Mammary epithelial cell (primary cell): ENCODE measurements at regions of chr17 and their contacts with region 1.

Region 1: GRCh38 chr17:40559954-40560591 is 5.2 kb downstream of the CCR7 start:
- DNase-seq: peak; percentile 90
- H3K4me3 ChIP-seq: no peak overlapping the region
- H3K27ac ChIP-seq: peak overlapping the region; percentile 30
- H3K4me1 ChIP-seq: peaks cover 15% of the 10 kb centered on the region
- H3K27me3 ChIP-seq: no peaks in the 10 kb centered on the region
- CTCF ChIP-seq: peak; percentile 99

Region 2: DNA sequence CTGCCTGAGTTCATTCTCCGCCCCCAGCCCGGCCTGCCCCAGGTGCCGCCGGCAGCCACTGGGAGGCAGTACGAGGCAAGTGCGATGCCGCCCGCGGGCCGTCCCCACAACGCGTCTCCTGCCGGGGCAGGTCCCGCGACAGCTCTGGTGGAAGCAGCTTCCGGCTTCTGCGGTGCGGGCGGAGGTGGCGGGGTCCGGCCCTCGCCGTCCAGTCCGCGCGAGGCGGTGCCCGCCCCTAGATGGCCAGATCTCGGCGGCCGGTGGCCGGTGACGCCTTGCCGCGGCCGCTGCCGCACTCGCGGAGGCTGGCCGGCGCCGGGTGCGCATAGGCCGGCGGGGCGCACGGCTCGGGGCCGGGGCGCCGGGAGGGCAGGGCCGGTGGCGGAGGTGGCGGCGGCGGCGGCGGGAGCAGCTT is 197.4 kb before region 1 on chr17:
- CTCF ChIA-PET with region 1: no interaction called
- dilution Hi-C with region 1: no loop called
- in situ Hi-C with region 1: no loop called
- intact Hi-C with region 1: loop called (anchors 1 kb)
- DNase-seq: peak; percentile 68
- H3K4me3 ChIP-seq: peak overlapping the region in 2 of 3 experiments; percentile 53 to 55
- H3K27ac ChIP-seq: no peak overlapping the region
- H3K4me1 ChIP-seq: peaks cover 8% of the 10 kb centered on the region
- H3K27me3 ChIP-seq: no peaks in the 10 kb centered on the region
- CTCF ChIP-seq: peak; percentile 63 to 84

Region 3: DNA sequence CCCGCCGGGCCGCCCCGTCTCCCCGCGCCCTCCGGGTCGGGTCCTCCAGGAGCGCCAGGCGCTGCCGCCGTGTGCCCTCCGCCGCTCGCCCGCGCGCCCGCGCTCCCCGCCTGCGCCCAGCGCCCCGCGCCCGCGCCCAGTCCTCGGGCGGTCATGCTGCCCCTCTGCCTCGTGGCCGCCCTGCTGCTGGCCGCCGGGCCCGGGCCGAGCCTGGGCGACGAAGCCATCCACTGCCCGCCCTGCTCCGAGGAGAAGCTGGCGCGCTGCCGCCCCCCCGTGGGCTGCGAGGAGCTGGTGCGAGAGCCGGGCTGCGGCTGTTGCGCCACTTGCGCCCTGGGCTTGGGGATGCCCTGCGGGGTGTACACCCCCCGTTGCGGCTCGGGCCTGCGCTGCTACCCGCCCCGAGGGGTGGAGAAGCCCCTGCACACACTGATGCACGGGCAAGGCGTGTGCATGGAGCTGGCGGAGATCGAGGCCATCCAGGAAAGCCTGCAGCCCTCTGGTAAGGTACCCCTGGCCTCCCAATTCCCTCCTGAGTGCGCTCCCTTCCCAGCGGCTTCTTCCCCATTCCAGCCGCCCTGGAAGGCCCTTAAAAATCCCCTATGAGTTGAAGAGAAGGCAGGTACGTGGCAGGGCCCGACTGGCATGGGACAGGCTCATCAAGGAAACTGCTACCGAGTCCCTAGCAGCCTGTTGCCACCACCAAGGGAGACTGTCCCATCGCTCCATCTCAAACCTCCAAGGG is 116.3 kb before region 1 on chr17:
- CTCF ChIA-PET with region 1: interaction called, 11 read pairs
- dilution Hi-C with region 1: loop called (anchors 5 kb)
- in situ Hi-C with region 1: no loop called
- intact Hi-C with region 1: loop called (anchors 1 kb)
- DNase-seq: peak; percentile 55
- H3K4me3 ChIP-seq: peak overlapping the region; percentile 25 to 60 (median 45)
- H3K27ac ChIP-seq: peak overlapping the region; percentile 0
- H3K4me1 ChIP-seq: peaks cover 34% of the 10 kb centered on the region
- H3K27me3 ChIP-seq: no peaks in the 10 kb centered on the region
- CTCF ChIP-seq: peak; percentile 41 to 68

Region 4: GRCh38 chr17:40490289-40490853 is 69.7 kb before region 1 on chr17:
- CTCF ChIA-PET with region 1: no interaction called
- dilution Hi-C with region 1: no loop called
- in situ Hi-C with region 1: no loop called
- intact Hi-C with region 1: loop called (anchors 1 kb)
- DNase-seq: peak; percentile 85
- H3K4me3 ChIP-seq: no peak overlapping the region
- H3K27ac ChIP-seq: peak overlapping the region; percentile 96
- H3K4me1 ChIP-seq: peaks cover 97% of the 10 kb centered on the region
- H3K27me3 ChIP-seq: no peaks in the 10 kb centered on the region
- CTCF ChIP-seq: peak in 1 of 2 donors; percentile 1

Region 5: DNA sequence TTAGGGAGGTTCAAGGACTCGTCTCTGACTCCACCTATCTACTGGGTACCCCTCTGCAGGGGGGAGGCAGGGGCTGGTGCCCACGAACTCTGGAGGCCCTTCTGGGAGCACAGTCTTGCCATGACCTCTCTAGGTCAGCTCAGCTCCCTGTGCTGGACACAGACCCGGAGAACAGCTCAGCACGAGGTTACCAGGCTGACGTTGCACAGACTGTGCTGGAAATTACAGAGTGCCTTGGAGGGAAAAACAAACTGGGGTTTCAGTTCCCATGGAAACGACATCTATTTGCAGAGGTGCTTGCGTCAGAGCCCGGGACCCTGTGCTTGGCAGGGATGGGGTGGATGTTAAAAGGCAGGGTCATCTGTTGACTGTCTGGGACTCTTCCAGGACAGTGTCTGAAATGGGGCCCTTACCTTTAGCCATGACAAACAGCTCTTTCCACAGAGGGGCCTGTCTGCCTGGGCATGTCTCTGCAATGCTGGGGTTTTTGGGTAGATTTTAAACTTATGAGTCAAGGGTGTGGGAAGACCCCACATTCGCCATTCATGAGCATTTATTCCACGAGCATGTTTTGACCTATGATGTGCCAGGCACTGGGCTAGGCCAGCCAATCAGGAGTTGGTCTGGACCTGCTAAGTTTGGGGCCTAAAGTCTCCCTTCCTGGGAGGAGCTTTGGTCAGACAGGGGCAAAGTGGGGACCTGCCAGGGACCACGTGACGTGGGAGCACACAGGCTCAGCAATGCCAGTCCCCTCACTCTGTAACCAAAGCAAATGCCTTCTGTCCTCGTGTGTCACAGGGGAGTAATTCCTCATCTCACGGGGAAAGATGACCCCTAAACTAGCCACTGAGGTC is 17.3 kb before region 1 on chr17:
- CTCF ChIA-PET with region 1: interaction called, 30 read pairs
- dilution Hi-C with region 1: no loop called
- in situ Hi-C with region 1: no loop called
- intact Hi-C with region 1: loop called (anchors 1 kb)
- DNase-seq: peak; percentile 96
- H3K4me3 ChIP-seq: no peak overlapping the region
- H3K27ac ChIP-seq: peak overlapping the region; percentile 87
- H3K4me1 ChIP-seq: peaks cover 62% of the 10 kb centered on the region
- H3K27me3 ChIP-seq: no peaks in the 10 kb centered on the region
- CTCF ChIP-seq: no peak

Region 6: GRCh38 chr17:40577611-40578065 is 17.6 kb after region 1 on chr17:
- CTCF ChIA-PET with region 1: no interaction called
- dilution Hi-C with region 1: no loop called
- in situ Hi-C with region 1: no loop called
- intact Hi-C with region 1: no loop called
- DNase-seq: no peak
- H3K4me3 ChIP-seq: no peak overlapping the region
- H3K27ac ChIP-seq: no peak overlapping the region
- H3K4me1 ChIP-seq: peaks cover 11% of the 10 kb centered on the region
- H3K27me3 ChIP-seq: no peaks in the 10 kb centered on the region
- CTCF ChIP-seq: no peak